Naive thymus-derived CD4-positive, alpha-beta T cell (primary cell): ENCODE measurements at regions of chr3 and their contacts with region 1.

Region 1: DNA sequence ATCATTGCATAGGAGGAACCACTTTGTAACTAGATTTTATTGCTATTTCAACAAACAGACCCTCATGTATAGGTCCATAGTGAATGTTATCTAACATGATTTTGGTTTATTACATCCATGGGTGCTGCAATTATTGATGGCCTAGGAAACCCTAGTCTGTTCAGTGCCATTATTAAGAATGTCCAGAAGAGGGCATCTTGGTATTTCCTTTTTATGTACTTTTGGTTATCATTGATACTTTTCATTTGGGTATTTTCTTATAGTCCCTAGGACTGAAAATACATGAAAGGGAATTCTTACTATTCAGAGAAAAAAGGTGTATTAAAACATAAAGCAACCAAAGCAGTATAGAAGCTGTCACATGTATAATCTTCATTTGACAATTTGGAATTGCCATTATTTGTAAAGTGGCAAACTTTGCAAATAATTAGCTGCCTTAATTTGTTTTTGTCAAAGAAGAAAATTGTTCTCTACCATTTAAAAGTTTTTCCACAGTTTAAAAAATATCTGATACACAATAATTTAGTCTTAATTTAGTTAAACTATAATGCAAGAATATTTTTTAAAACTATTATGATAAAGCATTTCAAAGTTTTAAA is 48.7 kb downstream of the CNOT10 start:
- DNase-seq: peak in 2 of 9 donors; percentile 3 to 11
- ATAC-seq: peak; percentile 42
- H3K4me3 ChIP-seq: no peak overlapping the region
- H3K4me3 Mint-ChIP-seq: no peak overlapping the region
- H3K27ac ChIP-seq: no peak overlapping the region
- H3K27ac Mint-ChIP-seq: no peak overlapping the region
- H3K4me1 ChIP-seq: no peaks in the 10 kb centered on the region
- H3K4me1 Mint-ChIP-seq: peaks cover 0 to 1% (median 0%) of the 10 kb centered on the region in 7 donors
- H3K27me3 ChIP-seq: no peaks in the 10 kb centered on the region
- H3K27me3 Mint-ChIP-seq: no peaks in the 10 kb centered on the region

Region 2: GRCh38 chr3:31086698-31087097 is 1647.0 kb before region 1 on chr3:
- CTCF ChIA-PET with region 1: no interaction called
- POLR2A ChIA-PET with region 1: no interaction called
- intact Hi-C with region 1: no loop called
- DNase-seq: no peak
- ATAC-seq: no peak
- H3K4me3 ChIP-seq: no peak overlapping the region
- H3K4me3 Mint-ChIP-seq: no peak overlapping the region
- H3K27ac ChIP-seq: no peak overlapping the region
- H3K27ac Mint-ChIP-seq: peak overlapping the region in 3 of 9 donors; percentile 28 to 51 (median 38)
- H3K4me1 ChIP-seq: no peaks in the 10 kb centered on the region
- H3K4me1 Mint-ChIP-seq: peaks cover 0 to 5% (median 0%) of the 10 kb centered on the region in 7 donors
- H3K27me3 ChIP-seq: no peaks in the 10 kb centered on the region
- H3K27me3 Mint-ChIP-seq: no peaks in the 10 kb centered on the region

Region 3: DNA sequence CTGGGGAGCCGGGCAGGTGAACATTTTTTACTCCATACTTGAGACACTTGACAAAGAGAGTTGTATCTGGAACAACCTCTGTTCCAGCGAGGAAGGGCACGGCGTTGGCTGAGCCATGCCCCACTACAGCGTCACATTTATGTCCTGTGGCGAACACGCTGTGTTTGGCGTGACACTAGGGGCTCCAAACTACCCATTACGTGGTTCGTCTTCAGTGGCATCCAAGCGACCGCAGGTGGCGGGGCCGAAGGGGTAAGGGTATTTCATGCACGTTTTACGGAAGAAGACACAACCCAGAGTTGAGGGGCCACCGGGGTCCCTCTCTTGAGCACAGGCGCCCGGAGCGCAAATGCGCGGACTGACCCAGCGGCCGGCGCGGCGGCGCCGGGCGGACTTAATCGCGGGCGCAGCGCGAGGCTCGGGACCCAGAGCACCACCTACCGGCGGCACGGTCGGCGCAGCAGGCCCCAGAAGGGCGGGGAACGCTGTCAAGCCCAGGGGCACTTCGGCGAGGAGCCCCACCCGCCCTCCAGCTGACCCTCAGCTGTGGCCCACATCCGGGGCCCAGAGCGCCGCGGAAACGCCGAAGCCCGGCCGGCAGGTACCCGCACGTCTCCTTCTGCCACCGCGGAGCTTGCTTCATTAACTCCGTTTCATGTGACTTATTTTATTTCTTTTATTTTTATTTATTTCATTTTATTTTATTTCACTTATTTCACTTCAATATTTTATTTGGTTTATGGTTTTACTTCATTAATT is 47.7 kb after region 1 on chr3:
- CTCF ChIA-PET with region 1: no interaction called
- POLR2A ChIA-PET with region 1: no interaction called
- intact Hi-C with region 1: loop called in 1 of 2 experiments (anchors 2 kb)
- DNase-seq: peak in 8 of 9 donors; percentile 11 to 80 (median 44)
- ATAC-seq: peak; percentile 93
- H3K4me3 ChIP-seq: peak overlapping the region; percentile 62
- H3K4me3 Mint-ChIP-seq: peak overlapping the region; percentile 86 to 97 (median 91)
- H3K27ac ChIP-seq: no peak overlapping the region
- H3K27ac Mint-ChIP-seq: peak overlapping the region in 3 of 9 donors; percentile 30 to 59 (median 32)
- H3K4me1 ChIP-seq: peaks cover 0 to 7% of the 10 kb centered on the region in 2 donors
- H3K4me1 Mint-ChIP-seq: peaks cover 0 to 9% (median 4%) of the 10 kb centered on the region in 7 donors
- H3K27me3 ChIP-seq: peaks cover 0 to 4% of the 10 kb centered on the region in 2 donors
- H3K27me3 Mint-ChIP-seq: peaks cover 6 to 18% (median 10%) of the 10 kb centered on the region in 5 donors

Region 4: DNA sequence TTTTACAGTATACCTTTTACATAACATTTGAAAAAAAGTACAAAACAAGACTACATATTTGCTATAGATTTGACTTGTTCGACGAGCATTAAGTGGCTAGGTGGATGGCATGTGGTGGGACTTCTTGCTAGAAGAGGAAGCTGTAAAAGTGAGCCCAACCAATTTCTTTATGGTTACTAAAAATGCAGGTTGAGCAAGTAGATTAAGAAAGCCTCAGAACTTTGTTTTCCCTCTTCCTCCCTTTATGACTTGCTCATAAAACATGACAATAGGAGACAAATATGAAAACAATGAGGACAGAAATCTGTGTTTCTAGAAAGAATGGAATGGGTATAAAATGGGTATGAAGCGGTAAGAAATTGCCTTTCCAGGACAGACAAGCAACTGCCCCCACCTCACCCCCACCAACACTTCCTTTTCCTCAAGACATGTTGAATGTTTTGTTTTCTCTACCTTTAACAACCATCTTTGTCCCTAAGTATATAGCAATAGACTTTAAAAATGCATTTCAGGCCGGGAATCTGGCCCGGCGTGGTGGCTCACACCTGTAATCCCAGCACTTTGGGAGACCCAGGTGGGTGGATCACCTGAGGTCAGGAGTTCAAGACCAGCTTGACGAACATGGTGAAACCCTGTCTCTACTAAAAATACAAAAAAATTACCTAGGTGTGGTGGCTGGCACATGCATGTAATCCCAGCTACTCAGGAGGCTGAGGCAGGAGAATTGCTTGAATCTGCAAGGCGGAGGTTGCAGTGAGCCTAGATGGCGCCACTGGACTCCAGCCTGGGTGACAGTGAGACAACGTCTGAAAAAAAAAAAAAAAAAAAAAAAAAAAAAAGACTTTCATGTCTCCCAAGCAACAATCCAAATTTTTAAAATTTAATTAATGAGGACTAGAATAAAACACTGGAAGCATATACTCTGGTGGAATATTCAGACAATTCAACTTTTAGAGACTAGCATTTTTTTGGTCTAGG is 168.0 kb after region 1 on chr3:
- CTCF ChIA-PET with region 1: no interaction called
- POLR2A ChIA-PET with region 1: no interaction called
- intact Hi-C with region 1: loop called in 1 of 2 experiments (anchors 10 kb)
- DNase-seq: peak in 3 of 9 donors; percentile 17 to 23 (median 19)
- ATAC-seq: no peak
- H3K4me3 ChIP-seq: no peak overlapping the region
- H3K4me3 Mint-ChIP-seq: peak overlapping the region in 9 of 10 donors; percentile 32 to 77 (median 56)
- H3K27ac ChIP-seq: no peak overlapping the region
- H3K27ac Mint-ChIP-seq: no peak overlapping the region
- H3K4me1 ChIP-seq: no peaks in the 10 kb centered on the region
- H3K4me1 Mint-ChIP-seq: peaks cover 0 to 9% (median 2%) of the 10 kb centered on the region in 7 donors
- H3K27me3 ChIP-seq: no peaks in the 10 kb centered on the region
- H3K27me3 Mint-ChIP-seq: peaks cover 5 to 41% (median 9%) of the 10 kb centered on the region in 5 donors

Region 5: GRCh38 chr3:32934150-32934742 is 200.5 kb after region 1 on chr3:
- CTCF ChIA-PET with region 1: no interaction called
- POLR2A ChIA-PET with region 1: no interaction called
- intact Hi-C with region 1: loop called (anchors 1 kb)
- DNase-seq: peak in 1 of 9 donors; percentile 18
- ATAC-seq: no peak
- H3K4me3 ChIP-seq: no peak overlapping the region
- H3K4me3 Mint-ChIP-seq: no peak overlapping the region
- H3K27ac ChIP-seq: no peak overlapping the region
- H3K27ac Mint-ChIP-seq: no peak overlapping the region
- H3K4me1 ChIP-seq: no peaks in the 10 kb centered on the region
- H3K4me1 Mint-ChIP-seq: no peaks in the 10 kb centered on the region
- H3K27me3 ChIP-seq: no peaks in the 10 kb centered on the region
- H3K27me3 Mint-ChIP-seq: peaks cover 0 to 16% (median 8%) of the 10 kb centered on the region in 5 donors

Region 6: DNA sequence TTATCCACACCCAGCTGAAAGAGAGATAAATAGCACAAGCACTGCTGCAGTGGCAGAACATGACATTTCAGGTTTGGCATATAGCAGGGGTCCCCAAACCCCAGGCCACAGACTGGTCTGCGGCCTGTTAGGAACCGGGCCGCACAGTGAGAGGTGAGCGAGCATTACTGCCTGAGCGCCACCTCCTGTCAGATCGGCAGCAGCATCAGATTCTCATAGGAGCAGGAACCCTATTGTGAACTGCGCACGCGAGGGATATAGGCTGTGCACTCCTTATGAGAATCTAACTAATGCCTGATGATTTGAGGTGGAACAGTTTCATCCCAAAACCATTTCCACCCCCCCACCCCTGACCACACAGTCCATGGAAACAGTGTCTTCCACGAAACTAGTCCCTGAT is 272.4 kb after region 1 on chr3:
- CTCF ChIA-PET with region 1: no interaction called
- POLR2A ChIA-PET with region 1: no interaction called
- intact Hi-C with region 1: no loop called
- DNase-seq: no peak
- ATAC-seq: no peak
- H3K4me3 ChIP-seq: no peak overlapping the region
- H3K4me3 Mint-ChIP-seq: no peak overlapping the region
- H3K27ac ChIP-seq: no peak overlapping the region
- H3K27ac Mint-ChIP-seq: peak overlapping the region in 1 of 9 donors; percentile 3
- H3K4me1 ChIP-seq: peaks cover 14 to 17% of the 10 kb centered on the region in 2 donors
- H3K4me1 Mint-ChIP-seq: peaks cover 16 to 34% (median 24%) of the 10 kb centered on the region in 7 donors
- H3K27me3 ChIP-seq: no peaks in the 10 kb centered on the region
- H3K27me3 Mint-ChIP-seq: no peaks in the 10 kb centered on the region

Region 7: GRCh38 chr3:33372218-33373081 is 638.7 kb after region 1 on chr3:
- CTCF ChIA-PET with region 1: no interaction called
- POLR2A ChIA-PET with region 1: no interaction called
- intact Hi-C with region 1: loop called in 1 of 2 experiments (anchors 2 kb)
- DNase-seq: peak in 8 of 9 donors; percentile 14 to 57 (median 38)
- ATAC-seq: peak; percentile 80
- H3K4me3 ChIP-seq: no peak overlapping the region
- H3K4me3 Mint-ChIP-seq: no peak overlapping the region
- H3K27ac ChIP-seq: no peak overlapping the region
- H3K27ac Mint-ChIP-seq: no peak overlapping the region
- H3K4me1 ChIP-seq: peaks cover 0 to 4% of the 10 kb centered on the region in 2 donors
- H3K4me1 Mint-ChIP-seq: peaks cover 2 to 8% (median 6%) of the 10 kb centered on the region in 7 donors
- H3K27me3 ChIP-seq: peaks cover 0 to 6% of the 10 kb centered on the region in 2 donors
- H3K27me3 Mint-ChIP-seq: peaks cover 12 to 32% (median 22%) of the 10 kb centered on the region in 5 donors